PC-9 (cell line): ENCODE measurements at regions of chr11 and their contacts with region 1.

Region 1: GRCh38 chr11:120511116-120511819 is at the start of gene GRIK4:
- DNase-seq: peak; percentile 56 to 74
- H3K4me3 ChIP-seq: peak within 1 kb of the TSS; percentile 44; the same call in 1 of the 2 replicates
- H3K27ac ChIP-seq: no peak within 1 kb of the TSS
- H3K4me1 ChIP-seq: no peaks in the 10 kb centered on the region
- H3K27me3 ChIP-seq: peaks cover 72% of the 10 kb centered on the region
- CTCF ChIP-seq: peak; percentile 97
- total RNA-seq, gene GRIK4: not detected in 2 replicates

Region 2: DNA sequence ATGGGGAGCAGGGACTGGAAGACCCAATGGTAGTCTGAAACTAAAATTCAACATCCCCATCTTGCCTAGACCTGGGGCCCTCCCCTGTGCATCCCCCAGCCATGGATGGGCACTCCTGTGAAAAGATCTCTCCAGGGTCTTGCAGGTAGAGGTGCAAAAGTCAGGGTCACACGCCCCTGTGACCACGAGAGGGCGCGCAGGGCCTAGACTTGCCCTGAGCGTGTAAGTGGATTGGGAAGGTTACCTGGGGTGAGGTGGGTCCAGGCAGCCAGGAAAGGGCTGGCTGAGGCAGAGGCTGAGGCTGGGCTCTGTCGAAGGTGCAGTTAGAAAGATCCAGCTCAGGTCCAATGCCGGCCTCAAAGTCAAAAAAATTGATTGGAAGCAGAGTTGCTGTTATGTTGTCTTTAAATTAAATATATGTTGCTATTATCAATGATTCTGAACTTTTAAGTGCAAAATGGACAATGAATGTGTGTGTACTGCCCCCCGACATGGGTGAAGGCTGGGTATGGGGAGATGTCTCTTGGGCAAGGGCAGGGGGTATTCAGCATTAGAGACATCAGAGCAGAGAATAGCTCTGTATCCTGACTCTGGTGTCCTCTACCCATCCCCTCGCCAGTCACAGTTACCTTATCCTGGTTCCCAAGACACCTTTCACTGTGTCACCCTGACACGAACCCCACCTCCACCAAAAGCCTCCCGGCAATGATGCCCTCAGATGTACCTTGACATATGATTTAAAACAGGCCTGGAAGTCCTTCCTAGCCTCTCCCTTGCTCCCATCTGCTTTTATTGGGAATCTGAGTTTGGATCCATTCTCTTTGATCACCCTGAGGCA is 276.0 kb before region 1 on chr11:
- CTCF ChIA-PET with region 1: no interaction called
- POLR2A ChIA-PET with region 1: no interaction called
- intact Hi-C with region 1: loop called (anchors 2 kb)
- DNase-seq: peak; percentile 70 to 77
- H3K4me3 ChIP-seq: no peak overlapping the region
- H3K27ac ChIP-seq: no peak overlapping the region
- H3K4me1 ChIP-seq: peaks cover 15% of the 10 kb centered on the region
- H3K27me3 ChIP-seq: peaks cover 4% of the 10 kb centered on the region; the same call in 1 of the 2 replicates
- CTCF ChIP-seq: peak; percentile 97

Region 3: DNA sequence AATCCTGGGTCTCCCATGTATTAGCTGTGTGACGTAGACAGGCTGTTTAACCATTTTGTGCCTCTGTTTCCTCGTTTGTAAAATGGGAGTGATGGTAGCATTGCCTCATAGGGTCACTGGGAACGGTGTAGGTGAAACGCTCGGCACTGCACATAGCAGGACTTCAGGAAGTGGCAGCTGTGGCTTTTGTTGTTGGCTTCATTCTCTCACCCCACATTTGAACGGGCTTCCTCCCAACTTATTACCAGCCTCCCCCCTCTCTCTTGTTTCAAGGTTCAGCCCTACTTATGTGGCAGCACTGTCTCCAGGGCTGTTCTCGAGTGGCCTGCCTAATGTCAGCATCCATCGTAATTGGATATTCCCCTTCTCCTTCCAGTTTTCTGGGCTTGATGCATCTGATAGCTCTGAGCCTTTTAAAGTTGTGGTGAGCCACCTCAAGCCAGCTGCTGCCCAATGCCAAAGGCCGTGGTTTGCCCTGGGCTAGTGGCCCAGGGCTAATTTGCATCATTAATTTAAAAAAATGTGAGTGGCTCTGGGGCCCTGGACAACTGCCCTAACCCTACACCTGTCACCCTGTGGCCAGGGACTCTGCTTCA is 294.8 kb after region 1 on chr11:
- CTCF ChIA-PET with region 1: no interaction called
- POLR2A ChIA-PET with region 1: no interaction called
- intact Hi-C with region 1: loop called (anchors 1 kb)
- DNase-seq: no peak
- H3K4me3 ChIP-seq: no peak overlapping the region
- H3K27ac ChIP-seq: no peak overlapping the region
- H3K4me1 ChIP-seq: peaks cover 12% of the 10 kb centered on the region
- H3K27me3 ChIP-seq: no peaks in the 10 kb centered on the region; the same call in 1 of the 2 replicates
- CTCF ChIP-seq: no peak

Region 4: GRCh38 chr11:121112498-121113455 is 601.5 kb after region 1 on chr11:
- CTCF ChIA-PET with region 1: no interaction called
- POLR2A ChIA-PET with region 1: no interaction called
- intact Hi-C with region 1: loop called (anchors 10 kb)
- DNase-seq: peak; percentile 21 to 52
- H3K4me3 ChIP-seq: no peak overlapping the region
- H3K27ac ChIP-seq: no peak overlapping the region
- H3K4me1 ChIP-seq: no peaks in the 10 kb centered on the region
- H3K27me3 ChIP-seq: peaks cover 83% of the 10 kb centered on the region
- CTCF ChIP-seq: peak; percentile 80

Region 5: DNA sequence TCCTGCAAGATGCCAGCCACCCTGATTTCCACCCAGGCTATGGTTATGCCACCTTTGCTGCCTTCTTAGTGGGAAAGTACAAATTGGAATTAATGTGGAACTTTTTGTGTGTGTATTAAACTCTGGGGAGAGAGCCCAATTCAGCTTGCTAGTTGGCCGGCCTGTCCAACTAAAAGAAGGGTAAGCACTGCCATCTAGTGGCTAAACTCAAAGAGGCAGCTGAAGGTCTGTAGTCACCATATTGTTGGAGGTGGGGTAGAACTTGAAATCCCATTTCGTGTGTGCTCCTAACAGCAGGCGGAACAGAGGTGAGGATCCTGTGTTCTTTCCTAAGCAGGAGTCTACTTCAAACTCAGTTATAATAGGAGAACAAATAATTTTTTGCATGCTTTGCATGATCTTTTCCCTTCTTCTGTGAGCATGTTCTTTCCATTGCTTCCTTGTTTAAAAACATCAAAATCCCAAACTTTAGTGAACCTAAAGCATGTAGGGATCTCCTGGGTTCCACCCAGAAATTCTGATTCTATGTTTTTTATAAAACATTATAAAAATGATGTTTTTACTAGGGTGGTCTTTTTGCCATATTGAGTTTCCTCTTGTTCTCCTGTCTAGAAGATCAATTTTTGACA is 1080.3 kb after region 1 on chr11:
- CTCF ChIA-PET with region 1: no interaction called
- POLR2A ChIA-PET with region 1: no interaction called
- intact Hi-C with region 1: loop called (anchors 5 kb)
- DNase-seq: peak in 1 of 2 experiments; percentile 61
- H3K4me3 ChIP-seq: no peak overlapping the region
- H3K27ac ChIP-seq: no peak overlapping the region
- H3K4me1 ChIP-seq: peaks cover 9% of the 10 kb centered on the region
- H3K27me3 ChIP-seq: peaks cover 42% of the 10 kb centered on the region; the same call in 1 of the 2 replicates
- CTCF ChIP-seq: peak; percentile 93